ENCODE measurements at regions of chr6 and their contacts with region 1.

Region 1: GRCh38 chr6:7112741-7113313 is 5.1 kb downstream of the RREB1 start:
- DNase-seq: peak; percentile 61
- H3K4me3 ChIP-seq: peak overlapping the region; percentile 8 to 33 (median 13)
- H3K27ac ChIP-seq: peak overlapping the region; percentile 20
- H3K4me1 ChIP-seq: peaks cover 31% of the 10 kb centered on the region
- H3K27me3 ChIP-seq: no peaks in the 10 kb centered on the region
- CTCF ChIP-seq: no peak

Region 2: GRCh38 chr6:7129784-7130569 is 17.1 kb after region 1 on chr6:
- CTCF ChIA-PET with region 1: no interaction called
- dilution Hi-C with region 1: no loop called
- in situ Hi-C with region 1: no loop called
- intact Hi-C with region 1: loop called (anchors 2 kb)
- DNase-seq: no peak
- H3K4me3 ChIP-seq: no peak overlapping the region
- H3K27ac ChIP-seq: no peak overlapping the region
- H3K4me1 ChIP-seq: peaks cover 17% of the 10 kb centered on the region
- H3K27me3 ChIP-seq: no peaks in the 10 kb centered on the region
- CTCF ChIP-seq: no peak